ENCODE measurements at regions of chr7 and their contacts with region 1.

Region 1: GRCh38 chr7:47266131-47266706 is 315.7 kb downstream of the TNS3 start:
- DNase-seq: peak; percentile 84
- H3K4me3 Mint-ChIP-seq: peak overlapping the region; percentile 4
- H3K27ac Mint-ChIP-seq: peak overlapping the region; percentile 65
- H3K4me1 Mint-ChIP-seq: peaks cover 13% of the 10 kb centered on the region
- H3K27me3 Mint-ChIP-seq: no peaks in the 10 kb centered on the region
- CTCF ChIP-seq: peak; percentile 99

Region 2: GRCh38 chr7:47291461-47292081 is 25.4 kb after region 1 on chr7:
- CTCF ChIA-PET with region 1: interaction called, 15 read pairs
- intact Hi-C with region 1: no loop called
- DNase-seq: peak; percentile 50
- H3K4me3 Mint-ChIP-seq: peak overlapping the region; percentile 25
- H3K27ac Mint-ChIP-seq: peak overlapping the region; percentile 85
- H3K4me1 Mint-ChIP-seq: peaks cover 32% of the 10 kb centered on the region
- H3K27me3 Mint-ChIP-seq: no peaks in the 10 kb centered on the region
- CTCF ChIP-seq: no peak

Region 3: GRCh38 chr7:47379629-47380324 is 113.6 kb after region 1 on chr7:
- CTCF ChIA-PET with region 1: interaction called, 19 read pairs
- intact Hi-C with region 1: no loop called
- DNase-seq: peak; percentile 77
- H3K4me3 Mint-ChIP-seq: peak overlapping the region; percentile 34
- H3K27ac Mint-ChIP-seq: peak overlapping the region; percentile 22
- H3K4me1 Mint-ChIP-seq: peaks cover 23% of the 10 kb centered on the region
- H3K27me3 Mint-ChIP-seq: no peaks in the 10 kb centered on the region
- CTCF ChIP-seq: no peak

Region 4: DNA sequence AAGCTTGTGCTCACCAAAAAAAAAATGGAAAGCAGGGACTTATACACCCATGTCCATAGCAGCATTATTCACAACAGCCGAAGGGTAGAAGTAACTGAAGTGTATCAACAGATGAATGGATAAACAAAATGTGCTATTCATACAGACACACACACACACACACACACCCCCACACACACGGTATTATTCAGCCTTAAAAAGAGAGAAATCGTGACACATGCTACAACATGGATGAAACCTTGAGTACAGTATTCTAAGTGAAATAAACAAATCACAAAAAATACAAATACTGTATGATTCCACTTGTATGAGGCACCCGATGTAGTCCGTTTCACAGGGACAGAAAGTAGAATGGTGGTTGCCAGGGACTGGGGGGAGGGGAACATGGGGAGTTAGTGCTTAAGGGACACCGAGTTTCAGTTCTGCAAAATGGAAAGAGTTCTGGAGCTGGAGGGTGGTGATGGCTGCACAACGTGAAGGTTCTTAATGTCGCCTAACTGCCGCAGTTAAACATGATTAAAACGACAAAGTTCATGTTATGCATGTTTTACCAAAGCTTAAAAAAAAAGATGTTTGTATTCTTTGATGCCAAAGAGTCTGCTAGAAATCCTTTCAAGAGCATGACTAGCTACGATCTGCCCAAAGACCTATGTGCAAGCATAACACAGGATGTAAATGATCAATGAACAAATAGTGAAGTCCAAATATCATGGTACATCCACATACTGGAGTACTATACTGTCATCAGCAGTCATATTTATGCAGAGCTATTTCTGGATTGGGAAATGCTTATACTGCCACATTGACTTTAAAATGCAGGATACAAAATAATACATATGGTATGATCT is 308.5 kb after region 1 on chr7:
- CTCF ChIA-PET with region 1: interaction called, 6 read pairs
- intact Hi-C with region 1: loop called (anchors 5 kb)
- DNase-seq: no peak
- H3K4me3 Mint-ChIP-seq: peak overlapping the region; percentile 32
- H3K27ac Mint-ChIP-seq: peak overlapping the region; percentile 61
- H3K4me1 Mint-ChIP-seq: peaks cover 87% of the 10 kb centered on the region
- H3K27me3 Mint-ChIP-seq: no peaks in the 10 kb centered on the region
- CTCF ChIP-seq: no peak

Region 5: DNA sequence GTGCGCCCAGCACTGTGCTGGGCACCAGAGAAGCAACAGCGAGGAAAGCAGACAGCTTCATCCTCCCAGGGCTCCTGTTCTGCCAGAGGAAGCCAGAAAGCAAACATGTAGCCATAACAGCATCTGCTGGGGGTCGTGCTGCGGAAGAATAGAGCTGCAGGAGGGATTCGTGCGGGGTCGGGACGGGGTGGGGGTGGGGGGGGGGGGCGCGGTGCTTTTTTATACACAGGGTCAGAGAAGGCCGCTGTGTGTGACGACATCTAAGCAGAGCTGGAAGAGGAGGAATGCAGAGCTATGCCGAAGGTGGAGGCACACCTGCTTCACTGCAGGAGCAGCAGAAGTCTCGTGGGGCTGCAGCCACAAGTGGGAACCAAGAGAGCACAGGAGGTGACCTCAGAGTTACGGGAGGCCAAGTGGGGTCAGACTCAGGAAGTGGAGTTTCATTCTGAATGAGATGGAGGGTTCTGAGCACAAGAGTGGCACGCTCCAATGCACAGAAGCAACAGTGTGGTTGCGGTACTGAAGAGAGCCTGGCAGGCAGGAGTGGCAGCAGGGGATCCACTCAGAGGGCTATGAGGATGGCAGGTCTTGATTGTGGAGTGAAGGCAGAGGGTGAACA is 671.0 kb after region 1 on chr7:
- CTCF ChIA-PET with region 1: interaction called, 36 read pairs
- intact Hi-C with region 1: loop called (anchors 1 kb)
- DNase-seq: no peak
- H3K4me3 Mint-ChIP-seq: no peak overlapping the region
- H3K27ac Mint-ChIP-seq: no peak overlapping the region
- H3K4me1 Mint-ChIP-seq: peaks cover 10% of the 10 kb centered on the region
- H3K27me3 Mint-ChIP-seq: no peaks in the 10 kb centered on the region
- CTCF ChIP-seq: no peak

Region 6: DNA sequence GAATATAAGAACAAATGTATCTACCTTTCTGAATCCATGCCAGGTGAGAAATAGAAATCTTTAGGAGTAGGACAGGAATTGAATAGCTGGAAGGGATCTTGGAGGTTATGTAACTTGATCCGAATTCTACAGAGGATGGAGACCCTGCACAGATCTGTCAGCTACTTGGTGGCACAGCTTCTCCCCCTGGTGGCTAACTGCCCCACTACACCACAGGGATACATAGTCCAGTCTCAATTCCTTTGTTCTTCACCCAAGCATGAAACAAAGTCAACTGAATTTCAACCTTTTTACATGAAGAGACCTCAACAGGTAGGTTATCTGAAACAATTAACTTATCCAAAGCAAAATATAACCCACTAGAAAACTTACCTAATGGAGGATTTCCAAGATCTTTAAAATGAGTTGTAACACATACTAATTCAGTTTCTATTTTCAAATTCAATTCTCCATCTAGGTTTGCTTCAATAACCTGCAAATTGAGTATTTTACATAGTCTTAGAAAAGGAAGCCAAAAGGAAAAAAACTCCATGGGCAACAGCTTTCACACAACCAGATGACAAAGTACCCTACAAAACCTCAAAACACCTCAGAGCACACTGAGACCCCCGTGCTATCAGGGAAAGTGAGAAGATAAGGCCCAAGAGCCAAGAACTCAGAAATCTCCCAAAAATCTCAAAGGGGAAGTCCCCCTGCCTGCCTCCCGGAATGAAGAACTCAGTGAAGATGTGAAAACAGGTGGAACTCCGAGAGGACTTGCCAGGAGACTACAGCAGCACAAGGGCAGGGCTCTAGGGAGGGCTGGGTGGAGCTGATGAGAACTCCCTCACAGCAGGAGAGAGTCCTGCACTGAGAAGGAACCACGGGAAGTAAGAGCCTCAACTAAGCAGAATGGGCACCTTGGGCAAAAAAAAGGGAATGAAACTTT is 702.9 kb after region 1 on chr7:
- CTCF ChIA-PET with region 1: interaction called, 15 read pairs
- intact Hi-C with region 1: loop called (anchors 1 kb)
- DNase-seq: peak; percentile 86
- H3K4me3 Mint-ChIP-seq: no peak overlapping the region
- H3K27ac Mint-ChIP-seq: no peak overlapping the region
- H3K4me1 Mint-ChIP-seq: peaks cover 24% of the 10 kb centered on the region
- H3K27me3 Mint-ChIP-seq: no peaks in the 10 kb centered on the region
- CTCF ChIP-seq: peak; percentile 89